Left cardiac atrium (tissue), 4 donors: ENCODE measurements at regions of chr13 and their contacts with region 1.

Region 1: DNA sequence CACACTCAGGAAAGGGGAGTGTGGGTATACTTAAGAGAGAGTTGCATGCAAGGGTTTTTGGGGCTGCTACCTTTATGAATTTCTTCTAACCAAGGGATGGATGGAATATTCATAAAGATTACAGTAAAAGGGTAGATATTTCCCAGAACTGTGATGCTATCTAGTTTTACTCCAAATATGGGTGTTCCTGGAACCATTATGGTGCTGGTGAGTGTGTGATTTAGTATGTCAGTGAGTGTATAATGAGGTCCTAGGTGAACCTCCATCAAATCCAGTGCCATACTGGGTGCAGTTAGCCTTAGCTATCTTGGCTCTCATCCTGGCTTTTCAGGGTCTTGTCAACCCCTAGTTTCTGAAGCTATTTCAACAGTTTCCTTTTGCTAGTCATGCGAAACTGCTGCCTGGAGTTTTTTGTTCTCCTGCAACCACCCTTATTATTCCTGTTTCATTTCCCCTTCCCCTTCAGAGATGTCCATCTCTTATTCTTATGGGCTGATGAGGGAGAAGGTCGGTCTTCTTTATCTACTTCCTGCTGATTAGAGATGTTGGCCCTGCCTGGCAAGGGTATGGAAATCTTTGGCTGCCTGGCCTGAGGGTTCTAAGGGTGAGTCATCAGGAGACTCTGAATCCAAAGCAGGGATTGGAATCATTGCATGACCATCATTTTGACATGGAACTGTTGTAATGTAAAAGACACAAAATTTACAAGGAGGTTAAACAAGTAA is 202.3 kb downstream of the NBEA start:
- DNase-seq: no peak
- ATAC-seq: peak in 1 of 2 donors; percentile 52

Region 2: DNA sequence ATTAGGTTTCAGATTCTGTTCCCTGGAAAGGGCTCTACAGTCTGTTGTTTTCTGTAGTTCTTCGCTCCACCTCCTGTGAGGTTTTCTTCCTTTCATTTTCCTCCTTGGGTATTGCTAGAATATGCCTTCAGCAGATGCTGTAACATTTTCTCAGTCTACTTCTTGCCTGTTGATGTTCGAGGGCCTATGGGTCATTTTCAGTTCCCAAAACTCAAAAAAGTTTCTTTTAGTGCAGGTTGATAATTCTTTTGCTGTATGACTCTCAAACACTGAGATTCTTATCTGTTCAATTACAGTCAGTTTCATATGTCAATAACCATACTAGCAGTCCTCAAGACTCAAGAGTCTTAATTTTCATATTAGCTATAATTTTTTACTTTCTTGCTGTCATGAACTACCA is 1058.0 kb before region 1 on chr13:
- intact Hi-C with region 1: loop called in 1 of 2 experiments (anchors 10 kb)
- DNase-seq: no peak
- ATAC-seq: no peak

Region 3: GRCh38 chr13:34300559-34300958 is 843.8 kb before region 1 on chr13:
- intact Hi-C with region 1: no loop called
- DNase-seq: no peak
- ATAC-seq: no peak